Heart right ventricle (tissue), 16 donors: ENCODE measurements at regions of chr10 and their contacts with region 1.

Region 1: GRCh38 chr10:28381903-28382347 is 79.1 kb upstream of the MPP7 start:
- DNase-seq: peak; percentile 47 to 79
- ATAC-seq: peak; percentile 77 to 93 (median 86)
- H3K4me3 ChIP-seq: no peak overlapping the region
- H3K27ac ChIP-seq: no peak overlapping the region
- H3K4me1 ChIP-seq: peaks cover 0 to 22% (median 0%) of the 10 kb centered on the region in 9 donors
- H3K27me3 ChIP-seq: peaks cover 0 to 8% (median 3%) of the 10 kb centered on the region in 7 donors
- CTCF ChIP-seq: peak; percentile 77 to 95 (median 92)

Region 2: GRCh38 chr10:28250782-28251181 is 131.1 kb before region 1 on chr10:
- intact Hi-C with region 1: loop called (anchors 1 to 5 kb)
- DNase-seq: no peak
- ATAC-seq: peak in 1 of 8 donors; percentile 46
- H3K4me3 ChIP-seq: no peak overlapping the region
- H3K27ac ChIP-seq: no peak overlapping the region
- H3K4me1 ChIP-seq: peaks cover 0 to 35% (median 7%) of the 10 kb centered on the region in 9 donors
- H3K27me3 ChIP-seq: no peaks in the 10 kb centered on the region
- CTCF ChIP-seq: peak; percentile 25 to 76 (median 60)